Right ventricle myocardium superior (tissue), 1 donor: ENCODE measurements at regions of chr6 and their contacts with region 1.

Region 1: GRCh38 chr6:160141001-160141726 is 19.5 kb downstream of the SLC22A1 start:
- DNase-seq: no peak
- ATAC-seq: no peak

Region 2: DNA sequence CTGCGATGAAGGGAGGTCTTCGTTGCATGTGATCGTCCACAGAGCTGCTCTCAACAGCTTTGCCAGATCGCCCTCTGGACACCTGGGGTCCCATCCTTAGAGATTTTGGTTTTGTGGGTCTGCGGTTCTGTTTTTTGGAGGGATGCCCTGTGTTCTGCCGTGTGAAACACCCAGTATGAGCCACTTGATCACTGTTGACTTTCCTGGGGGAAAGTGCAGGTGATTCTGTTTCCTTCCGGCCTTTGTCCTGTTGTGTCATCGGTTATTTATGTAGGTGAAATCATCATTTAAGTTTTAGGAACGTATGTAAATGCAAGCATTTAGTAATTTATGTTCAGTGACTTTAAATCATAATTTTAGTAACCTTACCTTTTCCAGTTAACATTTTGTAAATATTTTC is 76.0 kb before region 1 on chr6:
- intact Hi-C with region 1: no loop called
- DNase-seq: no peak
- ATAC-seq: no peak

Region 3: GRCh38 chr6:160455541-160456213 is 314.5 kb after region 1 on chr6:
- intact Hi-C with region 1: loop called (anchors 2 kb)
- DNase-seq: peak; percentile 67
- ATAC-seq: peak; percentile 93